HepG2 (cell line): ENCODE measurements at regions of chr6 and their contacts with region 1.

Region 1: GRCh38 chr6:10694302-10695085 is at the starts of genes C6orf52 and PAK1IP1:
- DNase-seq: peak; percentile 94
- ATAC-seq: peak; percentile 98
- H3K4me3 ChIP-seq: peak within 1 kb of the TSS; percentile 78 to 98 (median 97)
- H3K27ac ChIP-seq: peak within 1 kb of the TSS; percentile 96
- H3K4me1 ChIP-seq: peaks cover 44% of the 10 kb centered on the region
- H3K27me3 ChIP-seq: no peaks in the 10 kb centered on the region; a peak in 1 of 5 replicates
- CTCF ChIP-seq: peak; percentile 6; the same call in 1 of the 2 replicates
- EP300 ChIP-seq: peak; percentile 27 to 45; a peak in 3 of 4 replicates
- POLR2A ChIP-seq: peak; percentile 92 to 93
- RAD21 ChIP-seq: peak; percentile 37; the same call in 1 of the 2 replicates
- total RNA-seq, gene C6orf52: 0.53 and 0.66 TPM in 2 replicates
- total RNA-seq, gene PAK1IP1: 66.2 and 106 TPM in 2 replicates

Region 2: DNA sequence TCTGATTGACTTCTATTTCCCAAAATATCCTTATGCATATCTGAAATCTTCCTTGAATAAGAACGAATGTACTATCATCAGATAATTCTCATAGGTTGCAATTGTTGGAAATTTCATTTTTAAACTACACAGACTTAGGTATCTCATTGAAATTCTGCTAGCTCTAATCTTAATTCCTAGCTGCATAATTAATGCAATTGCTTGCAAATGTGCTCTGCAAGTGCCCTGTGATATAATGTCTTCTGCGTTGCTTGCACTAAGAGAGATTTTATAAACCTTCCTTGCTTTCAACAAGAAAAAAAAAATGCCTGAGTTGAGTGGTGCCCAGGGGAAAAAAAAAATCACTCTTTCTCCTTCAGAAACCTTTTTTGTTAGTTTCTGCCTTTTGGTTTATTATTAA is 634.5 kb before region 1 on chr6:
- CTCF ChIA-PET with region 1: no interaction called
- POLR2A ChIA-PET with region 1: no interaction called
- in situ Hi-C with region 1: no loop called
- intact Hi-C with region 1: no loop called
- DNase-seq: no peak
- ATAC-seq: no peak
- H3K4me3 ChIP-seq: no peak overlapping the region
- H3K27ac ChIP-seq: no peak overlapping the region
- H3K4me1 ChIP-seq: no peaks in the 10 kb centered on the region
- H3K27me3 ChIP-seq: no peaks in the 10 kb centered on the region
- CTCF ChIP-seq: no peak
- EP300 ChIP-seq: no peak
- POLR2A ChIP-seq: no peak
- RAD21 ChIP-seq: no peak

Region 3: GRCh38 chr6:10505529-10505928 is 189.0 kb before region 1 on chr6:
- CTCF ChIA-PET with region 1: no interaction called
- POLR2A ChIA-PET with region 1: interaction called, 5 read pairs
- in situ Hi-C with region 1: loop called (anchors 5 kb)
- intact Hi-C with region 1: loop called (anchors 1 kb)
- DNase-seq: peak; percentile 99
- ATAC-seq: peak; percentile 99
- H3K4me3 ChIP-seq: no peak overlapping the region
- H3K27ac ChIP-seq: no peak overlapping the region
- H3K4me1 ChIP-seq: peaks cover 24% of the 10 kb centered on the region
- H3K27me3 ChIP-seq: peaks cover 0 to 36% of the 10 kb centered on the region in 2 experiments; a peak in 4 of 5 replicates
- CTCF ChIP-seq: peak; percentile 64
- EP300 ChIP-seq: peak; percentile 91 to 95
- POLR2A ChIP-seq: no peak
- RAD21 ChIP-seq: peak; percentile 64; the same call in 1 of the 2 replicates

Region 4: GRCh38 chr6:10510592-10511367 is 183.7 kb before region 1 on chr6:
- CTCF ChIA-PET with region 1: no interaction called
- POLR2A ChIA-PET with region 1: interaction called, 5 read pairs
- in situ Hi-C with region 1: loop called (anchors 5 kb)
- intact Hi-C with region 1: loop called (anchors 1 kb)
- DNase-seq: peak; percentile 76
- ATAC-seq: peak; percentile 95
- H3K4me3 ChIP-seq: peak overlapping the region; percentile 29 to 58 (median 35); a peak in 5 of 6 replicates
- H3K27ac ChIP-seq: no peak overlapping the region
- H3K4me1 ChIP-seq: peaks cover 26% of the 10 kb centered on the region
- H3K27me3 ChIP-seq: peaks cover 0 to 4% of the 10 kb centered on the region in 2 experiments; a peak in 1 of 5 replicates
- CTCF ChIP-seq: peak; percentile 95
- EP300 ChIP-seq: no peak
- POLR2A ChIP-seq: no peak
- RAD21 ChIP-seq: peak; percentile 81

Region 5: DNA sequence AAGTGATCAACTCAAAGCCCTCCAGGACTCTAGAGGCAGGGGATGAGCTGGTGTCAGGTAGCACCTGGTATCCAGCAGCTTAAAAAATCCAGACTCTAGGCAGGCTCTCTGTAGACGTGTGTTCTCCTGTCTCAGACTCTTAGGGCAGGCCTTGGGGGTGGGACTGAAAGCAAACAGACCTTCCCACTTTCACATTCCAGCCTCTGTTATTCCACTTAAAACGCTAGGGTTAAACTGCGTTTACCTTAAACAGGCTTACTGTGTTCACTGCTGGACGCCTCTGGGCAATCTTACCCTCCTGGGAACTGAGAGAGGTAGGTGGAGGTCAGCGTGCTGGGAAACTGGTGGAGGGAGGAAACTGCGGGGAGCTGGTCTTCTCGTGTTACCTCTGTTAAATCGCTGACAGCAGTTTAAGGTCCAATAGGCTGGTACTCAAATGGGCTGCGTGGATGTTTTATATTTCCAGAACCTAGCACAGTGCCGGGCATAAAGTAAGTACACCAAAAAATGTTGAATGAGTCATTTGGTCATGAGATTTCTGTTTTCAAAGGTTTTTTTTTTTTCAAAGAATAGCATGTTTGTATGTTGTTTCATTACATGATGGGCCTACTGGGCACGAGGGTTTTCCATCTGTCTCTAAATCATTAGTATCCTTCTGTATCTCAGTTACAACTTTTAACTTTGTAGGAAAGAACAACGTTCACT is 173.2 kb before region 1 on chr6 and contains the start of gene GCNT2:
- CTCF ChIA-PET with region 1: no interaction called
- POLR2A ChIA-PET with region 1: interaction called, 18 read pairs
- in situ Hi-C with region 1: no loop called
- intact Hi-C with region 1: no loop called
- DNase-seq: peak; percentile 92
- ATAC-seq: peak; percentile 83
- H3K4me3 ChIP-seq: peak within 1 kb of the TSS; percentile 34 to 61 (median 50)
- H3K27ac ChIP-seq: peak within 1 kb of the TSS; percentile 30
- H3K4me1 ChIP-seq: peaks cover 42% of the 10 kb centered on the region
- H3K27me3 ChIP-seq: no peaks in the 10 kb centered on the region
- CTCF ChIP-seq: 0 out of 2 replicates have a peak, but pooled peaks have one; percentile 3
- EP300 ChIP-seq: no peak
- POLR2A ChIP-seq: peak in 1 of 2 experiments; percentile 52; a peak in 2 of 4 replicates
- RAD21 ChIP-seq: no peak
- total RNA-seq, gene GCNT2: 25.1 and 31.9 TPM in 2 replicates

Region 6: DNA sequence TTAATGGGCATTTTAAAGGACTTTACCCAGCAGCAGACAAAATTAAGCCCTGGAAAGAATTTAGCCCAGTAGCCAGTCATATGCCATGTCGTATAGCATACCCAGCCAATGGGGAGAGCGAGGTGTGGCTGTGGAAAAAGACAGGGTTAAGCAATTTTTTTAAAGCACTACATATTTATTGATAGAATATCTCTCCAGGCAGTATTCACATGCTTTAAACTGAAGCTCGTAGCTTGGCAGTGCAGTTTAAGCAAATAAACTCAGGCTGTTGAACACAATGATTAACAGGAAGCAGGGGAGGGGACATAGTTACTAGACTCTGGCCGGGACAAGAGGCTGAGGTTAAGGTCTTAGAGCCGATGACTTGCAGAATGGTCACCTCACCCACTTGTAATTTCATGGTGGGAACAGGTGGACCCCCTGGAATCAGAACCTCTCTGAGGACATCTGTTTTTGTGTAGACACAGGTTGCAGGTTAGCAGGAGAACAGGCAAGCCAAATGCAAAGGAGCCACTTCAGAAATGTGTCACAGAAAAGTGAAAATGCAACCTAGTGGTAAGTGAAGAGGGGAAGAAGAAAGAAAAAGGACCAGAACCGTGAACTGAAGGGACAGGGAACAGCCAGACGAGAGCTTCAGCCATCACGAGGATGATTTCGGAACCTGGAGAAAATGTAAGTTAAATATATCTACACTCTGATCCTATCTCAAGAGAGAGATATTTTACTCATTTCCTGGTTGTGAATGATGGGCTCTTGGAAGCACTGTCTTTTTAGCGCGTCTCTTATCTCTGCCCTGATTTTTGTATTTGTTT is 166.1 kb before region 1 on chr6:
- CTCF ChIA-PET with region 1: no interaction called
- POLR2A ChIA-PET with region 1: interaction called, 18 read pairs
- in situ Hi-C with region 1: no loop called
- intact Hi-C with region 1: loop called (anchors 1 kb)
- DNase-seq: peak; percentile 94
- ATAC-seq: peak; percentile 92
- H3K4me3 ChIP-seq: peak overlapping the region; percentile 72 to 79 (median 73)
- H3K27ac ChIP-seq: peak overlapping the region; percentile 90
- H3K4me1 ChIP-seq: peaks cover 40% of the 10 kb centered on the region
- H3K27me3 ChIP-seq: no peaks in the 10 kb centered on the region; a peak in 1 of 5 replicates
- CTCF ChIP-seq: no peak
- EP300 ChIP-seq: peak; percentile 48 to 64; a peak in 3 of 4 replicates
- POLR2A ChIP-seq: peak; percentile 63 to 96
- RAD21 ChIP-seq: no peak; the same call in 1 of the 2 replicates

Region 7: GRCh38 chr6:10621213-10621612 is 73.3 kb before region 1 on chr6:
- CTCF ChIA-PET with region 1: no interaction called
- POLR2A ChIA-PET with region 1: no interaction called
- in situ Hi-C with region 1: no loop called
- intact Hi-C with region 1: no loop called
- DNase-seq: no peak
- ATAC-seq: no peak
- H3K4me3 ChIP-seq: no peak overlapping the region
- H3K27ac ChIP-seq: no peak overlapping the region
- H3K4me1 ChIP-seq: no peaks in the 10 kb centered on the region
- H3K27me3 ChIP-seq: no peaks in the 10 kb centered on the region
- CTCF ChIP-seq: no peak
- EP300 ChIP-seq: no peak
- POLR2A ChIP-seq: no peak
- RAD21 ChIP-seq: no peak

Region 8: GRCh38 chr6:10668126-10668917 is 26.2 kb before region 1 on chr6:
- CTCF ChIA-PET with region 1: no interaction called
- POLR2A ChIA-PET with region 1: no interaction called
- in situ Hi-C with region 1: no loop called
- intact Hi-C with region 1: no loop called
- DNase-seq: no peak
- ATAC-seq: no peak
- H3K4me3 ChIP-seq: no peak overlapping the region
- H3K27ac ChIP-seq: no peak overlapping the region
- H3K4me1 ChIP-seq: no peaks in the 10 kb centered on the region
- H3K27me3 ChIP-seq: peaks cover 0 to 15% of the 10 kb centered on the region in 2 experiments; a peak in 3 of 5 replicates
- CTCF ChIP-seq: no peak
- EP300 ChIP-seq: no peak
- POLR2A ChIP-seq: no peak
- RAD21 ChIP-seq: no peak

Region 9: DNA sequence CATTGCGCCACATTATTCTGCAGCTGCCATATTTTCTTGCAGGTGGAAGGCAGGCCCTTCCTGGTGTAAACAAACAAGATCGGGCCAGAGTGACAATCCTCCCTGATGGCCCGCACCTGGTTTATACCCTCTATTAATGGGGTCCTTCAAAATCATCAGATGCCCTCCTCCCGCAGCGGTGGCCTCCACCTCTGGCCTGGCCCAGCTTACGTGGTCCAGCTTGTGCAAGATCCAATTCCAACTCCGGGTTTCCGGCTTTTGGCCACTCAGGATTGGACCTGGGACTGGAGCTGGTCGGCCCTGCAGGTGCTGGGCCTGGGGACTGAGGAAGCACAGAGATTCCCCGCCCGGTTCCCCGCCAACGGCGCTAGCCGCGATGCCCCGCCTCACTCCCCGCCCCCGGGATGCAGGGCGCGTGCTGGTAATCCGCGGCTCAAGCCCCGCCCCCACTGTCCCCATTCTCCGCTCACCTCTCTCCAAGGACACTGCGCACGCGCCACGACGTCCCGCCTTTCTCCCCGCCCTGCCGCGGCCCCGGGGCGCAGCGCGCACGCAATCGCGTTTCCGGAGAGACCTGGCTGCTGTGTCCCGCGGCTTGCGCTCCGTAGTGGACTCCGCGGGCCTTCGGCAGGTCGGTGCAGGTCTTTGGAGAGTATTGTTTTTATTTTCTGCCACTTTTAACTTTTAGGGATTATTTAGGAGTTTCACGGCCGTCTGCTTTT is 52.9 kb after region 1 on chr6 and contains the start of gene TMEM14B:
- CTCF ChIA-PET with region 1: no interaction called
- POLR2A ChIA-PET with region 1: interaction called, 13 read pairs
- in situ Hi-C with region 1: no loop called
- intact Hi-C with region 1: loop called (anchors 1 kb)
- DNase-seq: peak; percentile 97
- ATAC-seq: peak; percentile 98
- H3K4me3 ChIP-seq: peak within 1 kb of the TSS; percentile 73 to 87 (median 84)
- H3K27ac ChIP-seq: peak within 1 kb of the TSS; percentile 75
- H3K4me1 ChIP-seq: peaks cover 29% of the 10 kb centered on the region
- H3K27me3 ChIP-seq: no peaks in the 10 kb centered on the region
- CTCF ChIP-seq: peak; percentile 24; the same call in 1 of the 2 replicates
- EP300 ChIP-seq: peak in 1 of 2 experiments; percentile 37; a peak in 3 of 4 replicates
- POLR2A ChIP-seq: peak; percentile 89 to 95
- RAD21 ChIP-seq: peak; percentile 25
- total RNA-seq, gene TMEM14B: 191 and 200 TPM in 2 replicates

Region 10: GRCh38 chr6:10800829-10801535 is 106.5 kb after region 1 on chr6:
- CTCF ChIA-PET with region 1: interaction called, 3 read pairs
- POLR2A ChIA-PET with region 1: interaction called, 5 read pairs
- in situ Hi-C with region 1: no loop called
- intact Hi-C with region 1: loop called (anchors 1 kb)
- DNase-seq: peak; percentile 68
- ATAC-seq: peak; percentile 100
- H3K4me3 ChIP-seq: no peak overlapping the region
- H3K27ac ChIP-seq: no peak overlapping the region
- H3K4me1 ChIP-seq: peaks cover 7% of the 10 kb centered on the region; the same call in 1 of the 2 replicates
- H3K27me3 ChIP-seq: no peaks in the 10 kb centered on the region
- CTCF ChIP-seq: peak; percentile 95
- EP300 ChIP-seq: no peak
- POLR2A ChIP-seq: no peak
- RAD21 ChIP-seq: peak; percentile 87

Region 11: GRCh38 chr6:11011787-11012234 is 317.3 kb after region 1 on chr6:
- CTCF ChIA-PET with region 1: no interaction called
- POLR2A ChIA-PET with region 1: no interaction called
- in situ Hi-C with region 1: no loop called
- intact Hi-C with region 1: no loop called
- DNase-seq: peak; percentile 80
- ATAC-seq: peak; percentile 77
- H3K4me3 ChIP-seq: peak overlapping the region; percentile 3 to 59 (median 39)
- H3K27ac ChIP-seq: peak overlapping the region; percentile 95
- H3K4me1 ChIP-seq: peaks cover 94% of the 10 kb centered on the region
- H3K27me3 ChIP-seq: no peaks in the 10 kb centered on the region
- CTCF ChIP-seq: peak; percentile 45
- EP300 ChIP-seq: no peak
- POLR2A ChIP-seq: no peak
- RAD21 ChIP-seq: no peak